Caco-2 (cell line): ENCODE measurements at regions of chr3 and their contacts with region 1.

Region 1: DNA sequence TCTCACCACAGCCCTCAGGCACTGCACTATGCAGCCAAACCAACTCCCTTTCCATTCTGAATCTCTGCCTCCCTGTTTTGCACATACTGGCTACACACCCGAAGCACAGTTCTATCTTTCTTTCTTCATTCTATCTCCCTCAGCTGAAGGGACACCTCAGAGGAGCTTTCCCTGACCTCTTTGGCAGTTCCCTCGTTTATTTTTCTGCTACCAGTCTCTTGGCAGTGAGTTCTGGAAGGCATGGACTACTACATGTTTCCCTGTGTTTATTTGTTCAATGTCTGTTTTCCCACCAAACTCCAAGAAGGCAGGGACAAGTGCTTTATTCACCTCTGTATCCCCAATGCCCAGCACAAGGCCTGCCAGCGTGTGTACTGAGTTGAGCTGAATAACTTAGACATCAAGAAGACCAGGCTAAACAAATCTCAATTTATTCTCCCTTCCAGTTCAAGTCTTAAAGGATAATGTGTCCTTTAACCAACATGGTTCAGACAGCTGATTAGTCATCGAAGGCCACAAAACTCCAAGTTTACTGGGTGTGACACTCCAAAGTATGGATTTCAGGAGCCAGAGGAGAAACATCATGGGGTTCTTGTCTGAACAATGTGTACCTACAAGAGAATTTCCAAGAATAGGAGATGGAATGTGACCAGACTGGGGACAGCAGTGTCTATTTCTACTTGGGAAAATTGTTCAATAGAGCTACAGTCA is 260.1 kb upstream of the CTNNB1 start:
- DNase-seq: peak; percentile 5 to 42
- H3K4me3 ChIP-seq: no peak overlapping the region
- H3K4me3 Mint-ChIP-seq: peak overlapping the region; percentile 19
- H3K27ac Mint-ChIP-seq: peak overlapping the region; percentile 93
- H3K4me1 ChIP-seq: peaks cover 28% of the 10 kb centered on the region
- H3K4me1 Mint-ChIP-seq: peaks cover 29% of the 10 kb centered on the region
- H3K27me3 ChIP-seq: no peaks in the 10 kb centered on the region
- H3K27me3 Mint-ChIP-seq: no peaks in the 10 kb centered on the region
- CTCF ChIP-seq: no peak

Region 2: GRCh38 chr3:40869939-40870338 is 69.2 kb before region 1 on chr3:
- CTCF ChIA-PET with region 1: no interaction called
- POLR2A ChIA-PET with region 1: no interaction called
- intact Hi-C with region 1: no loop called
- DNase-seq: no peak
- H3K4me3 ChIP-seq: no peak overlapping the region
- H3K4me3 Mint-ChIP-seq: no peak overlapping the region
- H3K27ac Mint-ChIP-seq: peak overlapping the region; percentile 73
- H3K4me1 ChIP-seq: peaks cover 33% of the 10 kb centered on the region
- H3K4me1 Mint-ChIP-seq: peaks cover 33% of the 10 kb centered on the region
- H3K27me3 ChIP-seq: no peaks in the 10 kb centered on the region
- H3K27me3 Mint-ChIP-seq: no peaks in the 10 kb centered on the region
- CTCF ChIP-seq: no peak

Region 3: DNA sequence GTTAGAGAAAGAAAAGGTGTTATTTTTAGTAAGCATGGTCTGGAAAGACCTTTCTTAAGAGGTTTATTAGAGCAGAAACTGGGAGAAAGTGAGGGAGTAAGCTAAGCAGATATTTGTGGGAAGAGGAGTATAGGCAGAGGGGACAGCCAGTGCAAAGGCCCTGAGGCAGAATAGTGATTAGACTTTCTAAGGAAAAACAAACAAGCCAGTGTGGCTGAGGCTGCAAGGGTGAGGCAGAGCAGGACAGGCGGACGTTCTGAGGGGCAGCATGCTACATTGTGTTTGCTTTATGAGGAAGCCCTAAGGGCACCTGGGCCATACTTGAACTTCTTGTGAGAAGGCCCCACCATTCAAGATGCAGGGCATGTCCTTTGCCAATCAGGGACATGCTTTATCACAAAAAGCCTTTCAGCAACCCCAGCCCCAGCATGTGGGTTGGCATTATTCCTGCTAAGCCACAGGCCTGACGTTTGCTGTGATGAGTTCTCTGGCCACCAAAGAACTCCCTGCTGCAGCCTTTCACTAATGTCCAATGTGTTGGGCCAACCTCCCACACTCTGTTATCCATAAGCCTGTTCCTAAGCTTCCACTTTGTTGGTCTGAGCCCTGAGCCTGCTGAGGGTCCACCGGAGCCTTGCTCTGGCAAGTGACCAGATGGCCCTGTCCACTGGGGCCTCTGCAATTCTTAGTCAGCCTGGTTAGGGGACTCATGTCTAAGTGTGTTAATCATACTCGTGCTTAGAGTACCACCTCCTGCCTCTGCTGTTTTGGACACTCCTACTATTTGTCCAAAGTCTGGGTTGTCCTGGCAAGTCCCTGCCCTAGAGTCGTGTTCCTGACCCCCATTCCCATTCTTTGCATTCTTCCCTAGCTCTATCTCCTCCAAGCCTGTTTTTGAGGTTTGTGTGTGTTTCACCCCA is 50.2 kb after region 1 on chr3:
- CTCF ChIA-PET with region 1: no interaction called
- POLR2A ChIA-PET with region 1: no interaction called
- intact Hi-C with region 1: loop called (anchors 1 kb)
- DNase-seq: peak; percentile 34 to 59
- H3K4me3 ChIP-seq: no peak overlapping the region
- H3K4me3 Mint-ChIP-seq: no peak overlapping the region
- H3K27ac Mint-ChIP-seq: peak overlapping the region; percentile 12
- H3K4me1 ChIP-seq: peaks cover 25% of the 10 kb centered on the region
- H3K4me1 Mint-ChIP-seq: peaks cover 19% of the 10 kb centered on the region
- H3K27me3 ChIP-seq: no peaks in the 10 kb centered on the region; the same call in 1 of the 2 replicates
- H3K27me3 Mint-ChIP-seq: no peaks in the 10 kb centered on the region
- CTCF ChIP-seq: no peak

Region 4: GRCh38 chr3:40996382-40996781 is 57.2 kb after region 1 on chr3:
- CTCF ChIA-PET with region 1: no interaction called
- POLR2A ChIA-PET with region 1: no interaction called
- intact Hi-C with region 1: loop called (anchors 2 kb)
- DNase-seq: peak; percentile 66 to 73
- H3K4me3 ChIP-seq: no peak overlapping the region
- H3K4me3 Mint-ChIP-seq: peak overlapping the region; percentile 22
- H3K27ac Mint-ChIP-seq: peak overlapping the region; percentile 56
- H3K4me1 ChIP-seq: peaks cover 18% of the 10 kb centered on the region
- H3K4me1 Mint-ChIP-seq: peaks cover 13% of the 10 kb centered on the region
- H3K27me3 ChIP-seq: no peaks in the 10 kb centered on the region
- H3K27me3 Mint-ChIP-seq: no peaks in the 10 kb centered on the region
- CTCF ChIP-seq: no peak